Activated T-helper 2 cell treated with anti-CD3 and anti-CD28 coated beads, Interferon-gamma antibody, Interleukin-2, Interleukin-4, amounts not matched to agents 10 μg/mL and 5 μg/mL and 100 μg/mL, durations not matched to agents 14 hours and 24 hours and 36 hours (primary cell): ENCODE measurements at regions of chr6 and their contacts with region 1.

Region 1: DNA sequence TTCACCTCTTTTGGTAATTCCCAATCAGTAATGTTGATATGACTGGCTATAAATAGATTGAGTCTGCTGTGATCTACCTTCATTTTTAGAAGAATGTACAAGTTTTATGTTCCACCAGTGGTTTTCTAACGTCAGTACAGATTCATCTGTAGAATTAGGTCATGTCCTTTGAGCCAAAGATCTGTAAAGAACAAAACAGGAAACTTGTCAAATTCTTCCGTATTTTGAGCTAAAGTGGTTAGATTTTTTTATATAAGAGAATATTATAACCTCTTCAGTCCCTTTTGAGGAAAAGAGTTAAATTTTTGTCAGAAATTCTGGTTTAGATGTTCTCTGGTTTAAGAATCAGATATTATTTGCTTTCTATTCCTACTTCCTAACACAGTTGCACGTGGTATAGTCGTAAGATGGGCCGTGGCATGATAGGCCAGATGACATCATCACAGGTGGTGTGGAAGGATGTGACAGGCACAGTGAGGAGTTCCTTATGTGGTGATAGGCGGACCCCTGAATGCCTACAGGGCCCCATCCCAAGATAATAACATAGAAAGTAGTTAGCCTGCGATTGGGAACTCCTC is 62.3 kb downstream of the SNX9 start:
- DNase-seq: peak; percentile 37
- H3K4me3 Mint-ChIP-seq: no peak overlapping the region
- H3K27ac Mint-ChIP-seq: peak overlapping the region; percentile 86
- H3K4me1 Mint-ChIP-seq: peaks cover 55% of the 10 kb centered on the region
- H3K27me3 Mint-ChIP-seq: peaks cover 11% of the 10 kb centered on the region

Region 2: GRCh38 chr6:157527471-157527907 is 357.8 kb before region 1 on chr6:
- intact Hi-C with region 1: no loop called
- DNase-seq: peak; percentile 30
- H3K4me3 Mint-ChIP-seq: no peak overlapping the region
- H3K27ac Mint-ChIP-seq: peak overlapping the region; percentile 69
- H3K4me1 Mint-ChIP-seq: peaks cover 29% of the 10 kb centered on the region
- H3K27me3 Mint-ChIP-seq: no peaks in the 10 kb centered on the region

Region 3: DNA sequence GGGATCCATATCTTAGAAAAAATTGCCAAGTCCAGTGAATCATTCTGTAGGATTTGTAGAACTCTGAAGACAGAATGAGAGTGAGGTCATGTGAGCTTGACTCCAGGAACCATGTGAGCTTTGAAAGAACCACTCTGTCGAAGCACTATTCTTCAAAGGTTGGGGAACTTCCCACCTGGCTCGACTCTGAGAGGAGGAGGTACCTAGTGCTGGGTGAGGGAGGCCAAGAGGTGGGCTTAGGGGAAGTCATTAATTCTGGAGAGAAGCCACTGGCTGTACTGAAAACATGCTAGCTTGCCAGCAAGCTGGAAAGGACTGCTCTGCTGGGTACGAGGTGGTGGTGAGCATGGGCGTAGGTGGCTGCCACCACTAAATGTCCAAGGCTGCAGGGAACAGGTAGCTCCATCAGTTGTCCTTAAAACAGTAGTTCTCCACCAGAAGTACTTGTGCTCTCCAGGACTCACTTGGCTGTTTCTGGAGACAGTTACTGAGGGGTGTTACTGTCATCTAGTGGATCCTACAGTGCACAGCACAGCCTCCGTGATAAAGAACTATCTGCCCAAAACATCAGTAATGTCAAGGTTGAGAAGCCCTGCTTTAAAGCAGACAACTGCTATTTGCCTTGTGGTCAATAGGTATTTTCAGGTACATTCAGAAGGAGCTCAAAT is 61.7 kb after region 1 on chr6:
- intact Hi-C with region 1: loop called (anchors 5 kb)
- DNase-seq: no peak
- H3K4me3 Mint-ChIP-seq: no peak overlapping the region
- H3K27ac Mint-ChIP-seq: no peak overlapping the region
- H3K4me1 Mint-ChIP-seq: peaks cover 34% of the 10 kb centered on the region
- H3K27me3 Mint-ChIP-seq: peaks cover 17% of the 10 kb centered on the region

Region 4: GRCh38 chr6:157962601-157963302 is 77.5 kb after region 1 on chr6:
- intact Hi-C with region 1: loop called (anchors 5 kb)
- DNase-seq: peak; percentile 27
- H3K4me3 Mint-ChIP-seq: peak overlapping the region; percentile 76
- H3K27ac Mint-ChIP-seq: peak overlapping the region; percentile 86
- H3K4me1 Mint-ChIP-seq: peaks cover 24% of the 10 kb centered on the region
- H3K27me3 Mint-ChIP-seq: no peaks in the 10 kb centered on the region